Activated T-helper 2 cell treated with anti-CD3 and anti-CD28 coated beads, Interferon-gamma antibody, Interleukin-2, Interleukin-4, amounts not matched to agents 10 μg/mL and 5 μg/mL and 100 μg/mL, durations not matched to agents 14 hours and 24 hours and 36 hours (primary cell): ENCODE measurements at regions of chr11 and their contacts with region 1.

Region 1: DNA sequence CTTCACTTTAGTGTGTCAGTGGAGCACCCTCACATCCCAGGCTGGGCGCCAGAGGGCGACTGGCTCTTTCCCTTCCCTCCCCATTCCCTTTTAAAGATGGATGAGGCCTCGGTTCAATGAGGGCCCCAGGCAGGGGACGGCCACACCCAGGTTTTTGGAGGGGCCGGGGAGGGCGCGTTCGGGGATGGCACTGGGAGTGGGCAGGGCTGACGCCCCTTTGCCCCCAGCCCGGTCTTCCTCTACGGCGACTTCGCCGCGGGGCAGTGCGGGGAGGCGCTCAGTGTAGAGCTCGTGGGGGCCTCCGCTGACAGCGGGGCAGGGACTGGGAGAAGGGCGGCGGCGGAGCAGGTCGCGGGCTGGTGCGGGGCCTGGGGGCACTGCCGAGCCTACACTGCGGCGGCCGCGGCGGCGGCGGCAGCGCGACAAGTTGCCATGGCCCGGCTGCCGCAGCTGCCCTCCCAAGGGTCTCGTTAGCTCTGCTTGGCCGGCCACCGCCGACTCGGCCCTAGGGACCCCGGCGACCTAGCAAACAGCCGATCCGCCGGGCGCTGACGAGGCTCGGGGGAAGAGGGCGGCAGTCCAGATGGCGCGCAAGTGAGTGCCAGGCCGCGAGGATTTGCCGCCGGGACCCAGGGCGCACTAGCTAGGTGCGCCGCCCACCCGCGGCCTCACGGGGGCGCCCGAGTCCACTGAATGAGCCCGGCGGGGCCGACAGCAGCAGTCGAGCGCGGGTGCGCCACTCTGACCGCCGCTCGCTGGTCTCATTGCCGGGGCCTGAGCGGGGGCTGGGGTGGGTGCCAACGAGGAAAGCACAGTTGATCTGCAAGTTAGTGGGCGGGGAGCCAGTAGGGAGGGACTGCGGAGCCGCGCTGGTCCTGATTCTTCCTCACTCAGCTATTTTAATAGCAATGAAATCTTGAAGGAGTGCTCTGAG is 92.7 kb downstream of the RRM1 start:
- DNase-seq: peak; percentile 78
- H3K4me3 Mint-ChIP-seq: peak overlapping the region; percentile 77
- H3K27ac Mint-ChIP-seq: no peak overlapping the region
- H3K4me1 Mint-ChIP-seq: peaks cover 8% of the 10 kb centered on the region
- H3K27me3 Mint-ChIP-seq: peaks cover 14% of the 10 kb centered on the region

Region 2: GRCh38 chr11:4393209-4393857 is 206.0 kb after region 1 on chr11 and contains the start of gene TRIM21:
- intact Hi-C with region 1: loop called (anchors 10 kb)
- DNase-seq: peak; percentile 87
- H3K4me3 Mint-ChIP-seq: peak within 1 kb of the TSS; percentile 90
- H3K27ac Mint-ChIP-seq: peak within 1 kb of the TSS; percentile 85
- H3K4me1 Mint-ChIP-seq: peaks cover 25% of the 10 kb centered on the region
- H3K27me3 Mint-ChIP-seq: no peaks in the 10 kb centered on the region
- total RNA-seq, gene TRIM21: 31.9 and 34.9 TPM in 2 replicates

Region 3: DNA sequence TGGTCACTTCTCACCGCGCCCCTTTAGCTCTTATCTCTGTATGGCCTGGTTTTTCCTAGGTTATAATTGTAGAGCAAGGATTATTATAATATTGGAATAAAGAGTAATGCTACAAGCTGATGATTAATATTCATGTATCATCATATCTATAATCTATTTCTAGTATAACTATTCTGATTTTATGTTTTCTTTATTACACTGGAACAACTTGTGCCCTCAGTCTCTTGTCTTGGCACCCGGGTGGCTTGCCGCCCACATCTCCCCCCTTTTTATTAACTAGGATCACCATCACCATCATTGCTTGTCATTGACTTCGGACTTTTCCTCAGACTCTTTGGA is 306.1 kb after region 1 on chr11:
- intact Hi-C with region 1: loop called (anchors 1 kb)
- DNase-seq: no peak
- H3K4me3 Mint-ChIP-seq: no peak overlapping the region
- H3K27ac Mint-ChIP-seq: no peak overlapping the region
- H3K4me1 Mint-ChIP-seq: peaks cover 6% of the 10 kb centered on the region
- H3K27me3 Mint-ChIP-seq: peaks cover 16% of the 10 kb centered on the region

Region 4: GRCh38 chr11:4539603-4540219 is 352.4 kb after region 1 on chr11:
- intact Hi-C with region 1: loop called (anchors 1 kb)
- DNase-seq: peak; percentile 11
- H3K4me3 Mint-ChIP-seq: no peak overlapping the region
- H3K27ac Mint-ChIP-seq: no peak overlapping the region
- H3K4me1 Mint-ChIP-seq: no peaks in the 10 kb centered on the region
- H3K27me3 Mint-ChIP-seq: peaks cover 6% of the 10 kb centered on the region

Region 5: GRCh38 chr11:4551346-4551979 is 364.1 kb after region 1 on chr11:
- intact Hi-C with region 1: loop called (anchors 1 kb)
- DNase-seq: no peak
- H3K4me3 Mint-ChIP-seq: no peak overlapping the region
- H3K27ac Mint-ChIP-seq: no peak overlapping the region
- H3K4me1 Mint-ChIP-seq: no peaks in the 10 kb centered on the region
- H3K27me3 Mint-ChIP-seq: peaks cover 4% of the 10 kb centered on the region

Region 6: GRCh38 chr11:4636962-4637661 is 449.8 kb after region 1 on chr11 and contains the start of gene OR51D1:
- intact Hi-C with region 1: loop called (anchors 10 kb)
- DNase-seq: peak; percentile 48
- H3K4me3 Mint-ChIP-seq: no peak within 1 kb of the TSS
- H3K27ac Mint-ChIP-seq: no peak within 1 kb of the TSS
- H3K4me1 Mint-ChIP-seq: no peaks in the 10 kb centered on the region
- H3K27me3 Mint-ChIP-seq: no peaks in the 10 kb centered on the region
- total RNA-seq, gene OR51D1: not detected in 2 replicates